PC-9 (cell line): ENCODE measurements at regions of chr19 and their contacts with region 1.

Region 1: DNA sequence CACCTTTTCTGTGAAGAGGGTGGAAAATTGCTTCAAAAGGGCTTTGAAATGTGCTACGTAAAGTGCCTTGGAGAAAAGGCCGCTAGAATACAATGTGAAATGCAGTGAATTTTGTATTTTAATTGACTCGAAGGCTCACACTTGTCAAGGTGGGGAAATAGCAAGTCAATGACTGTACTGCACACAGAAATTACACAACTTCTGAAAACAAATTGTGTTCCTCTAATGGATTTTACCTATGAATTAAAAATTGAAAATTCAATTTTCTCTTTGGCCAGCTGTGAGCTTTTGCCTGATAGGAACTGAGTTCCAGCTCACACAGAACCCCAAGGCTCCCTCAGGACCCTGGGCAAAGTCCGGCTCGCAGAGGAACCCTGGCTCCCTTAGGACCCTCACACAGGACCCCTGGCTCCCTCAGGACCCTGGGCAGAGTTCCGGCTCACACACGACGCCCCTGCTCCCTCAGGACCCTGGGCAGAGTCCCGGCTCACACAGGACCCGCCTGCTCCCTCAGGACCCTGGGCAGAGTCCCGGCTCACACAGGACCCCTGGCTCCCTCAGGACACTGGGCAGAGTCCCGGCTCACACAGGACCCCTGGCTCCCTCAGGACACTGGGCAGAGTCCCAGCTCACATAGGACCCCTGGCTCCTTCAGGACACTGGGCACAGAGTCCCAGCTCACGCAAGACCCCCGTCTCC is 324.9 kb downstream of the UQCRFS1 start:
- DNase-seq: no peak
- H3K4me3 ChIP-seq: no peak overlapping the region
- H3K27ac ChIP-seq: no peak overlapping the region
- H3K4me1 ChIP-seq: no peaks in the 10 kb centered on the region
- H3K27me3 ChIP-seq: peaks cover 81% of the 10 kb centered on the region
- CTCF ChIP-seq: no peak

Region 2: GRCh38 chr19:28746478-28746877 is 141.6 kb before region 1 on chr19:
- CTCF ChIA-PET with region 1: no interaction called
- POLR2A ChIA-PET with region 1: interaction called, 10 read pairs
- intact Hi-C with region 1: no loop called
- DNase-seq: no peak
- H3K4me3 ChIP-seq: no peak overlapping the region
- H3K27ac ChIP-seq: no peak overlapping the region
- H3K4me1 ChIP-seq: no peaks in the 10 kb centered on the region
- H3K27me3 ChIP-seq: no peaks in the 10 kb centered on the region
- CTCF ChIP-seq: no peak